ENCODE measurements at regions of chr3 and their contacts with region 1.

Region 1: DNA sequence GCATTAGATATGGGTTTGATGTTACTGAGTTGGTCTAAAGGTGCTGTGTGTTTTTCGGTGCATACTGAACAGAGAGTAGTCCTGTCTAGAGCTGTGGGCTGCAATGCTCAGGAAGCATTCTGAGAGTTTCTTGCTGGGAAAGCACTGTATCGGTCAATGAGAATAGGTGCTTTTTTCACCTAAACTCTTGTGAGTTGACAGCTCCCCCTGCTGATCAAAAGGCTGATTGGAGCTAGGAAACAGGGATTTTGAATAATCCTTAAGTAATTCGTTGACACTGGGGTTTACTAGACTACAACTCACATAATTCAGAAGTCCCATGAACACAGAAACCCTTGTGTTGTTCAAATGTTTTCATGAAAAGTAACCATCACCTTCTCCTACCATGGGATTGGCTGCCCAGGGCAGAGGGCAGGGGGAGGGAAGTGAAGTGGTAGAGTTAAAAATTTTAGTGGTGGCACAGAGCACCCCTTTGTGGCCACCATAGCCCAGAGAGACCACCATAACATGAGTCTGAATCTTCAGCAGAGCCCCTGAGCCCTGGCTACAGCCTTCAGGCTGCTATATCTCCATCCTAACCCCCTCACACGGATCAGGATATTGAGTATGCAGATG is 13.0 kb upstream of the MANF start:
- DNase-seq: no peak
- ATAC-seq: peak in 1 of 4 donors; percentile 64
- H3K4me3 ChIP-seq: no peak overlapping the region
- H3K27ac ChIP-seq: no peak overlapping the region
- H3K4me1 ChIP-seq: peaks cover 8% of the 10 kb centered on the region
- H3K27me3 ChIP-seq: no peaks in the 10 kb centered on the region
- CTCF ChIP-seq: peak; percentile 56

Region 2: DNA sequence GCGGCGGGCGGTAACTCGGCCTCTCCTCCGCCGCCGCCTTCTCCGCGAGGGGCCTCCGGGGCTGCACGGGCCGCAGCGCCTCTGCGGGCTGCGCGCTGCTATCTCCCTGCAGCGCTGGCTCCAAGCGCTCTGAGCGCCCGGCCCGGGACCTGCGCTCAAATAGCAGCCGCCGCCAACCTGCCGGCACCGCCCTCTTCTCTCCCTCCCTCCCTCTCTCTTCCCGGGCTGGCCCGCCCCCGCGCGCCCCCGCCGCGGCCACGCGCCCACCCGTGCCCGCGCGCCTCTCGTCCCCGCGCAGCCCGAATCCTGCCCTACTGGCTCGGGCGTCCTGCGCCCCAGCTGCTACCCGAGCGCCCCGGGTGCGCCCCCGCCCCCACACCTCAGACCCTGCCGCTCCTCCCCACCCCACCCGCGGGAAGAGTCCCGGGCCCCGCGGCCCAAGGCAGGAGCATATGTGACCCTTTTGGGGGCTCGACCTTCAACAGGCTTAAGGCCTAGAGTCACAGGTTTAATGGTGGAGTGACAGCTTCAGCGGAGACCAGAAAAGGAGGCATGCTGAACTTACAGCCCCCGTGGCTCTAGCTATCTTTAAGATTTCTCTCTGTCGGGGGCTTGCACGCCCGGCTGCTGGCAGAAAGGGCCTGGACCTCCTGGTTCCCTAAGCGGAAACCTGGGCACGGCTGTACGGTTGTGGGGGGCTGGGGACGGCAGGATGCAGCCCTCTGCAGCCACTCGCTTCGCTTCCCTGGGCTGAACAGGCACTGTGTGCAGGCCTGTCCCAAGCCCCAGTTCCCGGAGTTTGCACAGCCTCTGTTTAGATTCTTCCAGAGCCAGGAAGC is 868.3 kb before region 1 on chr3 and contains the start of gene CACNA2D2:
- intact Hi-C with region 1: no loop called
- DNase-seq: peak; percentile 61 to 84
- ATAC-seq: peak; percentile 75 to 95 (median 88)
- H3K4me3 ChIP-seq: peak within 1 kb of the TSS; percentile 75
- H3K27ac ChIP-seq: peak within 1 kb of the TSS; percentile 36
- H3K4me1 ChIP-seq: no peaks in the 10 kb centered on the region
- H3K27me3 ChIP-seq: no peaks in the 10 kb centered on the region
- CTCF ChIP-seq: no peak
- total RNA-seq, gene CACNA2D2: 0.56 to 1.6 (median 1.2) TPM

Region 3: GRCh38 chr3:50568947-50569749 is 802.9 kb before region 1 on chr3 and contains the start of gene HEMK1:
- intact Hi-C with region 1: loop called in 1 of 2 experiments (anchors 5 kb)
- DNase-seq: peak; percentile 97 to 99
- ATAC-seq: peak; percentile 86 to 90 (median 88)
- H3K4me3 ChIP-seq: peak within 1 kb of the TSS; percentile 81
- H3K27ac ChIP-seq: peak within 1 kb of the TSS; percentile 89
- H3K4me1 ChIP-seq: peaks cover 15% of the 10 kb centered on the region
- H3K27me3 ChIP-seq: no peaks in the 10 kb centered on the region
- CTCF ChIP-seq: no peak
- total RNA-seq, gene HEMK1: 6.1 to 16.2 (median 9.3) TPM

Region 4: DNA sequence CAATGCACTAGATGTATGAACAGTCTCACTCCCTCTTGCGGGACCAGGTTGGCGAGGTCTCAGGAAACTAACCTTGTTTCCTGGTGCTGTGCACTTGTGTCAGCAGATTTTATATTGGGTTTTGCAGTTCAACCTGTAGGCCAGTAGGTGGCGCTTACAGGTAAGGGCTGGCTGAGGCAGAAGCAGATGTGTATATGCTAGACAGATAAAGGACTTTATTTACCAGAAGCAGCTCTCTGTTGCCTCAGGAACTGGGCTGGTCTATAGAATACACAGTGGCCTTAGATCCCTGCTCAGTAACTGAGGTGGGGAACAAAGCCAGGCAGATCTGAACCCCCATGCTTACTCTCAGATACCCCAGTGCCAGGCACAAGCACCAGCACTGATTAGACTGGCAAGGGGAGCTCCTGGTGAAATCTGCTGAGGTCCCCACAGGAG is 400.5 kb before region 1 on chr3:
- intact Hi-C with region 1: loop called in 1 of 2 experiments (anchors 5 kb)
- DNase-seq: no peak
- ATAC-seq: no peak
- H3K4me3 ChIP-seq: no peak overlapping the region
- H3K27ac ChIP-seq: no peak overlapping the region
- H3K4me1 ChIP-seq: no peaks in the 10 kb centered on the region
- H3K27me3 ChIP-seq: no peaks in the 10 kb centered on the region
- CTCF ChIP-seq: peak; percentile 57

Region 5: GRCh38 chr3:51099794-51100535 is 272.1 kb before region 1 on chr3:
- intact Hi-C with region 1: loop called in 1 of 2 experiments (anchors 5 kb)
- DNase-seq: no peak
- ATAC-seq: peak in 3 of 4 donors; percentile 42 to 54 (median 47)
- H3K4me3 ChIP-seq: no peak overlapping the region
- H3K27ac ChIP-seq: no peak overlapping the region
- H3K4me1 ChIP-seq: no peaks in the 10 kb centered on the region
- H3K27me3 ChIP-seq: no peaks in the 10 kb centered on the region
- CTCF ChIP-seq: peak; percentile 57

Region 6: DNA sequence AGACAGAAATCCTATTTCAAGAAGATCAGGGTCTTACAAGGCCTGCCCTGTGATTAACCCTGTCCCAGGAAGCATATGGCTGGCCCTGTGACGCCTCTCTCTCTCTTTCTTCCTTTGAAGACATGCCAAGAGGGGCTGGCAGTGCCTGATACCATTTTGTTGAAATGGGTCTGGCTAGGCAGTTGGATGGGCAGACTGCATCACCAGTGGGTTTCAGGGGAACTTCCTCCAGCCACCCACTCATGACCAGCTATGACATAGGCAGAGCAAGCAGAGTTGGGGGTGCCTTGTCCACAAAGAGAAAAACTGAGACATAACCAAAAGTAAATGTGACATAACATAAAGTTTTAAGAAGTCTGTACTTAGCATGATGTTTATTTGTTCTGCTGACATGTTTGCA is 18.4 kb before region 1 on chr3:
- intact Hi-C with region 1: no loop called
- DNase-seq: no peak
- ATAC-seq: no peak
- H3K4me3 ChIP-seq: no peak overlapping the region
- H3K27ac ChIP-seq: no peak overlapping the region
- H3K4me1 ChIP-seq: no peaks in the 10 kb centered on the region
- H3K27me3 ChIP-seq: no peaks in the 10 kb centered on the region
- CTCF ChIP-seq: no peak

Region 7: GRCh38 chr3:51799879-51800749 is 428.1 kb after region 1 on chr3:
- intact Hi-C with region 1: loop called in 1 of 2 experiments (anchors 10 kb)
- DNase-seq: no peak
- ATAC-seq: peak in 2 of 4 donors; percentile 40 to 67
- H3K4me3 ChIP-seq: no peak overlapping the region
- H3K27ac ChIP-seq: no peak overlapping the region
- H3K4me1 ChIP-seq: no peaks in the 10 kb centered on the region
- H3K27me3 ChIP-seq: no peaks in the 10 kb centered on the region
- CTCF ChIP-seq: peak; percentile 70